ENCODE measurements at regions of chr9 and their contacts with region 1.

Region 1: GRCh38 chr9:32092031-32092430 is 292.4 kb upstream of the ACO1 start:
- DNase-seq: no peak
- ATAC-seq: no peak

Region 2: GRCh38 chr9:31908158-31908890 is 183.7 kb before region 1 on chr9:
- intact Hi-C with region 1: loop called (anchors 5 kb)
- DNase-seq: no peak
- ATAC-seq: no peak

Measured in left ventricle myocardium superior (tissue), 1 donor.